Activated CD8-positive, alpha-beta T cell treated with anti-CD3 and anti-CD28 coated beads, Interleukin-2, amount 10 ng/mL, durations not matched to agents 7 days and 5 days (primary cell): ENCODE measurements at regions of chr6 and their contacts with region 1.

Region 1: DNA sequence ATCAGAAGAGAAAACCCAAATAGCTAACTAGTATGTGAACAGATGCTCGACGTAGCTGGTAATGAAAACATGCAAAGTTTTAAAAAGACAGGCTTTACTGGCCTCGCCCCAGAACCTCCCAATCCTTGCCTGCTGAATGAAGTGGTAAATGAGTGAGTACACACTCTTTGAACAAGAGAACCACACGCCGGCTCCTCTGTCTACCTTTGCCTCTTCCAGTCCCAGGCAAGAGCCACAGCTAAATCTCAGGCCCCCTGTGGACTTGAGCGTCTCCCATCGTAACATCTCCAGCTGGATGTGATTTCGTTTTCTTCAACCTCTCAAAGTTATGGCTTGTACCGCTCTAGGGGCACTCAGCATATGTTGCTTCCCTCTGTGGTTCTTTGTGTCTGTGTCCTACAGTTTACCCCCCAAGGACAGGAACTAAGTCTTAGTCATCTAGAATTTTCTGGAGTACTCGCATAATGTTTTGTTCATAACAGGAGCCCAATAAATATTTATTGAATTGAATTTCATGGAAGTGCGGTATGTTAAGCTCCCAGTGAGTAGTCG is 153.2 kb upstream of the TAB2 start:
- DNase-seq: no peak
- ATAC-seq: no peak
- H3K4me3 Mint-ChIP-seq: no peak overlapping the region
- H3K27ac Mint-ChIP-seq: no peak overlapping the region
- H3K4me1 Mint-ChIP-seq: peaks cover 38% of the 10 kb centered on the region
- H3K27me3 Mint-ChIP-seq: no peaks in the 10 kb centered on the region

Region 2: GRCh38 chr6:149153100-149153499 is 11.2 kb before region 1 on chr6:
- CTCF ChIA-PET with region 1: interaction called, 11 read pairs
- POLR2A ChIA-PET with region 1: no interaction called
- DNase-seq: no peak
- ATAC-seq: no peak
- H3K4me3 Mint-ChIP-seq: peak overlapping the region; percentile 26
- H3K27ac Mint-ChIP-seq: peak overlapping the region; percentile 81
- H3K4me1 Mint-ChIP-seq: peaks cover 73% of the 10 kb centered on the region
- H3K27me3 Mint-ChIP-seq: no peaks in the 10 kb centered on the region

Region 3: DNA sequence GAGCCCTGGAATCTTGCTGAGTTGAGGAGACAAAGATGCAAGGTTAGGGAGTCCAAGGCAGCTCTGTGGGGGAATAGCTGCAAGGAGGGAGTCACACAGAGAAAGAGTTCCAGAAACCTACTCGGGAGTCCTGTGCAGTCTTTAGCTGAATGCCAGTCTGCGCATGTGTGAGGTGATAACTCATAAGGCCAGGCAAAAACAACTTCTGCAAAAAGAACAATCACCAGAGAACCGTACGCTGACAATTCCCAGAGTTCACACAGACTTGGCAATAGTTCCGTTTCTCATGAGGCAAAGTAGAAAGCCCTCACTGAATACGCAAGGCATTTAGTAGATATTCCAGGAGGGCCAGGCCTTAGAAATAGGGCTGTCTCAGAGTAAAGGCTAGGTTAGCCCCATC is 18.0 kb after region 1 on chr6:
- CTCF ChIA-PET with region 1: no interaction called
- POLR2A ChIA-PET with region 1: no interaction called
- DNase-seq: no peak
- ATAC-seq: no peak
- H3K4me3 Mint-ChIP-seq: no peak overlapping the region
- H3K27ac Mint-ChIP-seq: no peak overlapping the region
- H3K4me1 Mint-ChIP-seq: peaks cover 5% of the 10 kb centered on the region
- H3K27me3 Mint-ChIP-seq: no peaks in the 10 kb centered on the region